ENCODE measurements at regions of chr14 and their contacts with region 1.

Region 1: DNA sequence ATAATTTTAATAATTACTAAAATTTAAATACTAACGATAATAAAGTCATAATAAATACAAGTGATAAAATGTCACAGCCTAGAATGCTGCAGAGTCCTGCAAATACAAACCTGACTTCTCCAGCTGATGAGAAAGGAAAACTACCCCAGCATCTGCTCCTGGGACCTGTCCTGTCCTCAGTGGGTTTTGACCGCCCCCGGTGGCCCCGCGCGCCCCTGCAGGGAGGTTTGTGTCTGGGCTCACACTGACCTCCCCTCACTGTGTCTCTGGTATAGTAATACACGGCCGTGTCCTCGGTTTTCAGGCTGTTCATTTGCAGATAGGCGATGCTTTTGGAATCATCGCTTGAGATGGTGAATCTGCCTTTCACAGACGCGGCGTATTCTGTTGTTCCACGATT is 1139.4 kb downstream of the TMEM121 start:
- DNase-seq: no peak
- ATAC-seq: no peak
- H3K4me3 ChIP-seq: no peak overlapping the region
- H3K4me3 Mint-ChIP-seq: no peak overlapping the region
- H3K27ac ChIP-seq: no peak overlapping the region
- H3K27ac Mint-ChIP-seq: no peak overlapping the region
- H3K4me1 ChIP-seq: peaks cover 9 to 10% of the 10 kb centered on the region in 2 donors
- H3K4me1 Mint-ChIP-seq: peaks cover 21% of the 10 kb centered on the region
- H3K27me3 ChIP-seq: peaks cover 0 to 6% (median 2%) of the 10 kb centered on the region in 4 experiments
- H3K27me3 Mint-ChIP-seq: peaks cover 10% of the 10 kb centered on the region
- CTCF ChIP-seq: no peak

Region 2: GRCh38 chr14:106681568-106681967 is 15.8 kb after region 1 on chr14:
- CTCF ChIA-PET with region 1: interaction called, 13 read pairs
- POLR2A ChIA-PET with region 1: no interaction called
- intact Hi-C with region 1: no loop called
- DNase-seq: no peak
- ATAC-seq: peak; percentile 41
- H3K4me3 ChIP-seq: no peak overlapping the region
- H3K4me3 Mint-ChIP-seq: no peak overlapping the region
- H3K27ac ChIP-seq: no peak overlapping the region
- H3K27ac Mint-ChIP-seq: no peak overlapping the region
- H3K4me1 ChIP-seq: peaks cover 0 to 4% of the 10 kb centered on the region in 2 donors
- H3K4me1 Mint-ChIP-seq: peaks cover 22% of the 10 kb centered on the region
- H3K27me3 ChIP-seq: peaks cover 0 to 7% (median 1%) of the 10 kb centered on the region in 4 experiments
- H3K27me3 Mint-ChIP-seq: peaks cover 13% of the 10 kb centered on the region
- CTCF ChIP-seq: peak; percentile 32

Region 3: GRCh38 chr14:106766145-106766544 is 100.3 kb after region 1 on chr14:
- CTCF ChIA-PET with region 1: interaction called, 19 read pairs
- POLR2A ChIA-PET with region 1: no interaction called
- intact Hi-C with region 1: no loop called
- DNase-seq: no peak
- ATAC-seq: no peak
- H3K4me3 ChIP-seq: no peak overlapping the region
- H3K4me3 Mint-ChIP-seq: no peak overlapping the region
- H3K27ac ChIP-seq: no peak overlapping the region
- H3K27ac Mint-ChIP-seq: no peak overlapping the region
- H3K4me1 ChIP-seq: peaks cover 23 to 28% of the 10 kb centered on the region in 2 donors
- H3K4me1 Mint-ChIP-seq: peaks cover 26% of the 10 kb centered on the region
- H3K27me3 ChIP-seq: peaks cover 0 to 5% (median 0%) of the 10 kb centered on the region in 4 experiments
- H3K27me3 Mint-ChIP-seq: peaks cover 12% of the 10 kb centered on the region
- CTCF ChIP-seq: no peak